Endothelial cell of umbilical vein (primary cell): ENCODE measurements at regions of chr6 and their contacts with region 1.

Region 1: DNA sequence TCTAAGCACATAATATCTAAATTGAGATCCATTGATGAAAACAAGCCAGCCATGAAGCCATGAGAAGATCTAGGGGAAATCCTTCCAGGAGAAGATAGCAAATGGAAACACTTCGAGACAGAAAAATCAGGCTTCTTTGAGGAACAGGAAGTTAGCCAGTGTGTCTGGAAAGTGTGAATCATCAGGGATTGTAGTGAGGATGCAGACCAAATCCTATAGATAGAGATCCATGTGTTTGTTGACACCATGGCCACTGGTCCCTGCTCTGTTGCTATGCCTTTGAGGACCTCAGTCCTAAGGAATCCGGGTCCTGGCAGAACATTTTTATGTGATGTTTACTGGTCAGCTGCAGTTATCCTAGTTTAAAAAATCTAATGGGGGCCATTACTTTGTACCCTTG is 6.6 kb upstream of the ELOVL2 start:
- DNase-seq: no peak
- H3K4me3 ChIP-seq: no peak overlapping the region
- H3K27ac ChIP-seq: no peak overlapping the region
- H3K4me1 ChIP-seq: no peaks in the 10 kb centered on the region
- H3K27me3 ChIP-seq: peaks cover 2 to 16% of the 10 kb centered on the region in 2 experiments
- CTCF ChIP-seq: no peak
- POLR2A ChIP-seq: no peak

Region 2: GRCh38 chr6:10747251-10747972 is 303.3 kb before region 1 on chr6 and contains the start of gene TMEM14B:
- CTCF ChIA-PET with region 1: no interaction called
- POLR2A ChIA-PET with region 1: no interaction called
- dilution Hi-C with region 1: no loop called
- intact Hi-C with region 1: no loop called
- DNase-seq: peak; percentile 97
- H3K4me3 ChIP-seq: peak within 1 kb of the TSS; percentile 59 to 94 (median 91)
- H3K27ac ChIP-seq: peak within 1 kb of the TSS; percentile 81
- H3K4me1 ChIP-seq: peaks cover 16% of the 10 kb centered on the region
- H3K27me3 ChIP-seq: no peaks in the 10 kb centered on the region
- CTCF ChIP-seq: no peak
- POLR2A ChIP-seq: peak; percentile 94
- total RNA-seq, gene TMEM14B: 54.6 and 58.2 TPM in 2 replicates

Region 3: DNA sequence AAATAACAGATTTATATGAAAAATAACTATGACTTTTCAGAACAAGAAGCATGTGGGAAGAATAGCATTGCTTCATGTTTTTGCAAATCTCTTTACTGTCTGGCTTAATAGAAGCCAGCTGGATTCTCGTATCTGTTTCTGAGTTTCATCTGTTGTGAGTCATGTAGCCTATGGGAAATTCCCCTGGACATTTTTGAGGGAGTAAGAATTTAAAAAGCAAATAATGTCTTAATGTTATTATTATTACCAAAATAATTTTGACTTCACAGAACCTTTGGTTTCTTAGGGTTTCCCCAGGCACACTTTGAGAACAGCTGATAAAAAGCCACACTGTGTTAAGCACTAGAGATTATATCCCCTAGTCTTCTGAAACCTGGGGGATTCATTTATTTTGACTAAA is 88.1 kb before region 1 on chr6:
- CTCF ChIA-PET with region 1: no interaction called
- POLR2A ChIA-PET with region 1: no interaction called
- dilution Hi-C with region 1: no loop called
- intact Hi-C with region 1: loop called (anchors 5 kb)
- DNase-seq: no peak
- H3K4me3 ChIP-seq: no peak overlapping the region
- H3K27ac ChIP-seq: no peak overlapping the region
- H3K4me1 ChIP-seq: no peaks in the 10 kb centered on the region
- H3K27me3 ChIP-seq: peaks cover 0 to 4% of the 10 kb centered on the region in 2 experiments
- CTCF ChIP-seq: no peak
- POLR2A ChIP-seq: no peak

Region 4: GRCh38 chr6:11076540-11076939 is 25.8 kb after region 1 on chr6:
- CTCF ChIA-PET with region 1: no interaction called
- POLR2A ChIA-PET with region 1: no interaction called
- dilution Hi-C with region 1: no loop called
- intact Hi-C with region 1: no loop called
- DNase-seq: no peak
- H3K4me3 ChIP-seq: no peak overlapping the region
- H3K27ac ChIP-seq: no peak overlapping the region
- H3K4me1 ChIP-seq: no peaks in the 10 kb centered on the region
- H3K27me3 ChIP-seq: no peaks in the 10 kb centered on the region
- CTCF ChIP-seq: no peak
- POLR2A ChIP-seq: no peak

Region 5: GRCh38 chr6:11097476-11097875 is 46.7 kb after region 1 on chr6:
- CTCF ChIA-PET with region 1: no interaction called
- POLR2A ChIA-PET with region 1: no interaction called
- dilution Hi-C with region 1: no loop called
- intact Hi-C with region 1: no loop called
- DNase-seq: no peak
- H3K4me3 ChIP-seq: no peak overlapping the region
- H3K27ac ChIP-seq: no peak overlapping the region
- H3K4me1 ChIP-seq: peaks cover 18% of the 10 kb centered on the region
- H3K27me3 ChIP-seq: no peaks in the 10 kb centered on the region
- CTCF ChIP-seq: no peak
- POLR2A ChIP-seq: no peak

Region 6: DNA sequence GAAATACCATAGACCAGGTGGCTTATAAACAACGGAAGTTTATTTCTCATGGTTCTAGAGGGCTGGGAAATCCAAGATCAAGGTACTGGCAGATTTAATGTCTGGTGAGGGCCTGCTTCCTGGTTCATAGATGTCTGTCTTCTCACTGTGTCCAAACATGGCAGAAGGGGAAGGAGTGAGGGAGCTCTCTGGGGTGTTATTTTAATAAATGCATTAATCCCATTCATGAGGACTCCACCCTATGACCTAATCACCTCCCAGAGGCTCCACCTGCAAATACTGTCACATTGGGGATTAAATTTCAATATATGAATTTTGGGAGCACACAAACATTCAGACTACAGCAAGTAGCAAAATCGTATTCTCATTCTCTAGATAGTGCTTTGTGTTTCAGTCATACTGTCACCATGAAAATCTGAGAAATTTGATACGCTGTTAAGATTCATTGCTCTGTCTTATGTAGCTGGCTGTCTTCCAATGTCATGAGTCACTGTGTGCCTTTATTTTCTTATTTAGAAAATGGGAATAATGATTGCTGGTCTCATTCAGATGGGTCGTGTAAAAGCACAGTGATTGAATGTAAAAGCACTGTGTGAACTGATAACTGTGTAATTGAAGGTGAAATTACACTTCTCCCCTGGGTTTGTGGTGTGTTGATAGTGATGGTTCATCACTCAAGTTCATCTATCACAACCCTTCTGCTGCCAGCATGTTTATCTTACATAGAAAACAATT is 69.7 kb after region 1 on chr6:
- CTCF ChIA-PET with region 1: no interaction called
- POLR2A ChIA-PET with region 1: no interaction called
- dilution Hi-C with region 1: no loop called
- intact Hi-C with region 1: no loop called
- DNase-seq: peak; percentile 65
- H3K4me3 ChIP-seq: no peak overlapping the region
- H3K27ac ChIP-seq: no peak overlapping the region
- H3K4me1 ChIP-seq: peaks cover 12% of the 10 kb centered on the region
- H3K27me3 ChIP-seq: no peaks in the 10 kb centered on the region
- CTCF ChIP-seq: no peak
- POLR2A ChIP-seq: no peak